ENCODE measurements at regions of chr4 and their contacts with region 1.

Region 1: GRCh38 chr4:184384056-184384809 is 90.1 kb downstream of the IRF2 start:
- DNase-seq: peak; percentile 93
- H3K4me3 ChIP-seq: peak overlapping the region; percentile 35 to 52 (median 45)
- H3K27ac ChIP-seq: peak overlapping the region; percentile 96
- H3K4me1 ChIP-seq: peaks cover 41% of the 10 kb centered on the region
- H3K27me3 ChIP-seq: no peaks in the 10 kb centered on the region
- CTCF ChIP-seq: no peak

Region 2: DNA sequence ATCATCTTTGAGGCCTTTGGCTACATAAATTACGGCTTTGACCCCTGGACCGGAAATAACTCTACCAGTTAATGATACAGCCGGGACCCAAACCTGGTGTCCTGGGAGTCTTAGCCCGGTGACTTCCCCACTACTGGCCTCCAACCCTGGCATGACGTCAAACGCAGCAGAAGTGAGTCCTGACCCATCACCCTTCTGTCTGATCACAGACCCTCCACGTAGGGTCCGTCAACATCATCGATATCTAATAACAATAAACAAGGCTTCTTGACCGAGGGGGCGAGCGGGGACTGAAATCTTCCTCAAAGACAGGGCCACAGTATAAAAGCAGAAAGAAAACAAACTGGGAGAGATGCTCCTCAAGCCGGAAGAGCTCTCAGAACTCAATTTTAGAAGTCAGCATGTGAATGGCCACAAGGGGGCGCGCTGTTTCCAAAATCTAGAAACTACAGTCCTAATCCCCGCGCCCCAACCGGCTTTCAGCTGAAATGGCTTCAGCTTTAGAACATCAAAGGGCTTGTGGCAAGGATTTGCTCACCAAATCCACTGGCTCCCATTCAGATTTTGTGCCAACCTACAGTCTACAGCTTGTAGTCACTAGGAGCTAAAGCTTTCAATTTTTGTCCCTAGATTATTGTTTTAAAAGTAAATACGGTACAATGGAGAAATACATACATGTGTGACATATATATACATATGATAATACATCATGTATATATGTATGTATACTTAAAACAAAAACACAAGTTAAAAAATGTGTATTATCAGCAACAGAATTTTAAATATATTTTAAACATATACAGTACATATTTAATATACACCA is 120.1 kb before region 1 on chr4:
- CTCF ChIA-PET with region 1: no interaction called
- dilution Hi-C with region 1: no loop called
- in situ Hi-C with region 1: no loop called
- intact Hi-C with region 1: loop called (anchors 1 kb)
- DNase-seq: peak; percentile 79
- H3K4me3 ChIP-seq: no peak overlapping the region
- H3K27ac ChIP-seq: no peak overlapping the region
- H3K4me1 ChIP-seq: peaks cover 26% of the 10 kb centered on the region
- H3K27me3 ChIP-seq: peaks cover under 1% of the 10 kb centered on the region
- CTCF ChIP-seq: peak; percentile 79 to 80

Region 3: GRCh38 chr4:184287697-184288255 is 96.5 kb before region 1 on chr4:
- CTCF ChIA-PET with region 1: no interaction called
- dilution Hi-C with region 1: no loop called
- in situ Hi-C with region 1: no loop called
- intact Hi-C with region 1: loop called (anchors 5 kb)
- DNase-seq: peak; percentile 50
- H3K4me3 ChIP-seq: no peak overlapping the region
- H3K27ac ChIP-seq: no peak overlapping the region
- H3K4me1 ChIP-seq: peaks cover 8% of the 10 kb centered on the region
- H3K27me3 ChIP-seq: no peaks in the 10 kb centered on the region
- CTCF ChIP-seq: peak; percentile 4 to 47

Region 4: GRCh38 chr4:184329659-184330400 is 54.4 kb before region 1 on chr4:
- CTCF ChIA-PET with region 1: no interaction called
- dilution Hi-C with region 1: no loop called
- in situ Hi-C with region 1: no loop called
- intact Hi-C with region 1: loop called (anchors 1 kb)
- DNase-seq: peak; percentile 85
- H3K4me3 ChIP-seq: no peak overlapping the region
- H3K27ac ChIP-seq: peak overlapping the region; percentile 83
- H3K4me1 ChIP-seq: peaks cover 37% of the 10 kb centered on the region
- H3K27me3 ChIP-seq: no peaks in the 10 kb centered on the region
- CTCF ChIP-seq: no peak

Region 5: DNA sequence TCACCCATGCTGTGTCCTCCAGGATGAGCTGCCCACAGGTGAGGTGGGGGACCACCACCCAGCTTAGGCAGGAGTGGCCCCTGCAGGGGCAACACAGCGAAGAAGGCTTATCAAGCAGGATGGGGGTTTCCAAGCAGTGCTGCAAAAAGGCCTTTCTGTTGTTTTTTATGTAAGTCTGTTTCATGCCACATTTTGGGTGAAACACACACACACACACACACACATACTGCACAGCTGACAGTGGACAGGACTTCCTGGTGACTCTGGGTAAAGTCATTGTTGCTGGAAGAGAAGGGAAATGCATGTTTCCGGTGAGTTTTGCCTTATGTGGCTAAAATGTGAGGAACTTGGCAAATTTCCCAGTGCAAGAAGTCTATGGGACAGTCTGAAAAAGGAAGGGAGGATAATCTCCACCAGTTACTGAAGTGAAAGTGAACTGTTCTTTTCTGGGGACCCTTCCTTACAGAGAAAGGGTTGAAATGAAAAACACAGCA is 29.1 kb before region 1 on chr4:
- CTCF ChIA-PET with region 1: no interaction called
- dilution Hi-C with region 1: no loop called
- in situ Hi-C with region 1: no loop called
- intact Hi-C with region 1: no loop called
- DNase-seq: peak; percentile 75
- H3K4me3 ChIP-seq: no peak overlapping the region
- H3K27ac ChIP-seq: no peak overlapping the region
- H3K4me1 ChIP-seq: peaks cover 21% of the 10 kb centered on the region
- H3K27me3 ChIP-seq: no peaks in the 10 kb centered on the region
- CTCF ChIP-seq: no peak

Region 6: DNA sequence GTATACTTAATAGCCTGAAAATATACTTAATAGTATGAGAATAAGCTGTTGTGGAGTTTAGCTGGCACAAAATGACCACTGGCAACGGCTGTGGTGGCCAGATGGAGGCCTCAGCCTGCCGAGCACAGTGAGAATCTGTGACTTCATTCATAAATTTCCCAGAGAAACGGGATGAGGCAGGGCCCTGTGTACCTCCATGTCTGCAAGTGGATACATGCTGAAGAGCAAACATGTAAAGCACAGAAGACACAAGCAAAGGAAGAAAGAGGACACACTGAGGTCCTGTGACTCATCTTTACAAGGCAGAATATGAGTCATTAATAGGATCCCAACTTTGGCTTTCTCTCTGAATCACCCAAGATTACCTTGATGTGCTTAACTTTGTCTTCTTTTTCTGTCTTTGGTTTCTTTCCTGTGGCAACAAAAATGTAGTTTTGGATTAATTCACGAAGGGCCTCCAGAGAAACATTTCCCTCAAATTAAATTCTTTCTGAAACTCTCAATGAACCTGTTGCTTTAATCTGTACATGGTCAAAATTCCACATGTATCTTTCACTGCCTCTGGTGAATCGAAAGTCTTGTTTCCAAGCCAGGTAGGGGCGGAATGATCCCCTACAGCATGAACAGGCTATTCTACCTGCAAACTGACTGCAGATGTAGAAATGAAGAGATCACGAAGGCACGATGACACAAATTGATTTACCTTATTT is 33.7 kb after region 1 on chr4:
- CTCF ChIA-PET with region 1: no interaction called
- dilution Hi-C with region 1: no loop called
- in situ Hi-C with region 1: no loop called
- intact Hi-C with region 1: loop called (anchors 2 kb)
- DNase-seq: peak; percentile 99
- H3K4me3 ChIP-seq: peak overlapping the region in 2 of 3 experiments; percentile 3 to 12
- H3K27ac ChIP-seq: peak overlapping the region; percentile 89
- H3K4me1 ChIP-seq: peaks cover 29% of the 10 kb centered on the region
- H3K27me3 ChIP-seq: no peaks in the 10 kb centered on the region
- CTCF ChIP-seq: peak; percentile 6 to 41

Measured in mammary epithelial cell (primary cell).